GM12878 (cell line): ENCODE measurements at regions of chr1 and their contacts with region 1.

Region 1: GRCh38 chr1:119367427-119368124 is 1.0 kb upstream of the HAO2 start:
- DNase-seq: no peak
- ATAC-seq: peak; percentile 82
- H3K4me3 ChIP-seq: no peak overlapping the region
- H3K27ac ChIP-seq: no peak overlapping the region
- H3K4me1 ChIP-seq: peaks cover 5% of the 10 kb centered on the region; the same call in 1 of the 2 replicates
- H3K27me3 ChIP-seq: no peaks in the 10 kb centered on the region
- CTCF ChIP-seq: peak; percentile 93 to 98 (median 94); a peak in 5 of 6 replicates
- EP300 ChIP-seq: no peak
- POLR2A ChIP-seq: no peak
- RAD21 ChIP-seq: peak; percentile 99

Region 2: DNA sequence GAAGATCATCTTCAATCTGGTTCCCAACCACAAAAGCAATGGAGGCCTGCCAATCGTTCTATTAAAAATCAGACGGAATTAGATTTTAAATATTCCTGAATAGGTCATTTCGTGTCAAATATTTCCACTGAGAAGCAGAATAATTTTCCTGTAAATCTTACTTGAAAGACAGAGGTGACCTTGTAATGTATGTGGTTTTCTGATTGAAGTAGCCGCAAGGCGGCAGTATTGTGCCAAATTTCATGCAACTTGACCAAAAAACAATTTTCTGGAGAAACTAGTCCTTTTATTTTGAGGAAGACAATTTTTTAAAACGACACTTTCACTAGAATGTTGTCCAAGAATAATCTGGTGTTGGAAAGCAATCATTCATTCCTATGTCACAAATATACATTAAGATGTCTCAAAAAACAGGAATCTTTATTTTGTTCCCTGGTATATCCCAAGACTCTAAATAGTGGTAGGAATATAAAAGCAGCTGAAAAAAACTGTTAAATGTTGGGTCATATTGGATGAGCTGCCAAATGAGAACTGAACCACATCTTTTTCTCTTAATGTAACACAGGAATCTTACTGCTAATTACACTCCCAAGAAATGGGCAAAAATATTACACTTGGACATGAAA is 1216.2 kb before region 1 on chr1:
- CTCF ChIA-PET with region 1: interaction called, 3 read pairs
- POLR2A ChIA-PET with region 1: no interaction called
- RAD21 ChIA-PET with region 1: no interaction called
- SMC1A ChIA-PET with region 1: no interaction called
- in situ Hi-C with region 1: no loop called
- intact Hi-C with region 1: loop called (anchors 5 kb)
- DNase-seq: peak; percentile 8
- ATAC-seq: peak; percentile 44; the same call in 2 of the 3 replicates
- H3K4me3 ChIP-seq: no peak overlapping the region
- H3K27ac ChIP-seq: no peak overlapping the region
- H3K4me1 ChIP-seq: no peaks in the 10 kb centered on the region
- H3K27me3 ChIP-seq: no peaks in the 10 kb centered on the region
- CTCF ChIP-seq: peak; percentile 73 to 87 (median 74)
- EP300 ChIP-seq: no peak
- POLR2A ChIP-seq: no peak
- RAD21 ChIP-seq: peak; percentile 76

Region 3: DNA sequence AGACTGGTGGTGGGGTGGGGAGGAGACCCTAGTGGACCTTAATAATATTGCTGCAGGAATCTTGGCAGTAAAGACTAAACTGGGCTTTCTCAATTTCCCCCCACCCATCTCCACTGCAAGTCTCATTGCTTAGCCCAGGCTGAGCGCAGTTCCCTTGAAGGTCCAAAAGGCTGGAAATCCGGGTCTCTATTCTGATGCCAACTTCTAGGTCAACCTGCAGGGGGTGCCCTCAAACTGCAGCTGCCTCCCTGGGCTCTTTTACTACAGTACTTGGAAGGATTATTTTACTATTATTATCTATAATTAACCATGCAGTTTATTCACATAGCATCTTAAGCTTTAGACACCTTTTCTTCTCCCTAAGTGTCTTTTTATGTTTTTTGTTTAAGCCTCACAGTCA is 141.7 kb before region 1 on chr1:
- CTCF ChIA-PET with region 1: interaction called, 5 read pairs
- POLR2A ChIA-PET with region 1: no interaction called
- RAD21 ChIA-PET with region 1: interaction called, 3 read pairs
- SMC1A ChIA-PET with region 1: interaction called, 3 read pairs
- in situ Hi-C with region 1: no loop called
- intact Hi-C with region 1: loop called (anchors 5 kb)
- DNase-seq: no peak
- ATAC-seq: no peak
- H3K4me3 ChIP-seq: no peak overlapping the region
- H3K27ac ChIP-seq: no peak overlapping the region
- H3K4me1 ChIP-seq: peaks cover 4% of the 10 kb centered on the region; the same call in 1 of the 2 replicates
- H3K27me3 ChIP-seq: no peaks in the 10 kb centered on the region
- CTCF ChIP-seq: peak; percentile 6 to 26 (median 19); a peak in 3 of 6 replicates
- EP300 ChIP-seq: no peak
- POLR2A ChIP-seq: no peak
- RAD21 ChIP-seq: peak; percentile 16; the same call in 1 of the 2 replicates

Region 4: DNA sequence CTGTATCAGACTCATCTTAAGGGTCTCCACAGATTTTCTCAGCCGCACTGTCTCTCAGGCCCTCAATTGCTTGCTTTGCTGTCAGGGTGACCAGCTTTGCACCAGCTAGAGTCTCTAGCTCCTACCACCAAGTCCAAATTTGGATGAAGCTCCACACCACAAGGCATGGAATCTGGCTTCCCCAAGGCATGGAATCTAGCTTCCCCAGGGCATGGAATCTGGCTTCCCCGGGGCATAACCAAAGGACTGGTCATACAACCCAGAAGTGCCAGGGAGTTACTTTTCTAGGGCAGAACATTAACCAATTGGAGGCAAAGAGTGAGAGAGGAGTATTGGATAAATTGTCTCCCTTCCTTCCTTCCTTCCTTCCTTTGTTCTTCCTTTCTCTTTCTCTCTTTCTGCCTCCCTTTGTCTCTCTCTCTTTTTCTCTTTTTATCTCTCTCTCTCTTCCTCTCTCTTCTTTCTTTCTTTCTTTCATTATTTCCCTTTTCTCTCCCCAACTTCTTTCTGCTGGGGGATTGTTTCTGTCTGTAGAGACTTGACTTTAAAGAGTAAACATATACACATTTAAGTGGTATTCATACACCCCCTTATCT is 75.9 kb before region 1 on chr1:
- CTCF ChIA-PET with region 1: interaction called, 137 read pairs
- POLR2A ChIA-PET with region 1: interaction called, 4 read pairs
- RAD21 ChIA-PET with region 1: interaction called, 63 read pairs
- SMC1A ChIA-PET with region 1: interaction called, 57 read pairs
- in situ Hi-C with region 1: loop called (anchors 5 kb)
- intact Hi-C with region 1: loop called (anchors 1 kb)
- DNase-seq: no peak
- ATAC-seq: no peak
- H3K4me3 ChIP-seq: no peak overlapping the region
- H3K27ac ChIP-seq: no peak overlapping the region
- H3K4me1 ChIP-seq: no peaks in the 10 kb centered on the region
- H3K27me3 ChIP-seq: no peaks in the 10 kb centered on the region
- CTCF ChIP-seq: no peak
- EP300 ChIP-seq: no peak
- POLR2A ChIP-seq: no peak
- RAD21 ChIP-seq: no peak

Region 5: DNA sequence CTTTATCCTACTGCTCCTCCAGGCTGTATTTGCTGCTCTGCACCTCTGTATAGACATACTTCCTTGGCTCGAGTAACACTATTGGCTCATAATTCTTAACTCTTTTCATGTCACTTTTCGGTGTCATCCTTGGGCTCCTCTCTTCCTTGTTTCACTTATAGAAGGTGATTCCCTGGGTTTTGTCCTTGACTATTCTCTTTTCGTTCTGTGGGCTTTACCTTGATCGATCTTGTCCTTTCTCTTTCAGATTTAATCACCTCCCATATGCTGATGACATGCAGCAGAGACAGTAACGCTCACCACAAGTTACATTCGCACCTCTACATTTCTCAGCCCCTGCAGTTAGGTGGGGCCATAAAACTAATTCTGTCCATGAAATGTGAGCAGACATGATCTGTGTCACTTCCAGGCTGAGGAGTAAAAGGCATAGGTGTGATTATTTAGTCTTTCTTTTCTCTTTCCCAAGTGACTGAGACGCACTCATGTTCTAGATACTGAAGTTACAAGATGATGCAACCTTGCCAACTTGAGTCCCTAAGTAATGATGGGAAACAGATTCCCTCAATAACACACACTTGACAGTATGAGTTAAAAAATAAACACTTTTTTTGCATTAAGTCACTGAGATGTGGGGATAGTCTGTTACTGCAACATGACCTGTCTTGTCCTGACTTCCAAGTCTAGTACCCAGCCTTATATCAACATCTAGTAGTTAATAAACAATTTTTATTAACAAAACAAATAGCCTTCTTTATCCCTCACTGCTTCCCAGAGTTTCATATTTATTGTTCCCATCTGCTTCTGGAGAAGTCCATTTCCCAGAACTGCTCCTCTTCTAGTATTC is 48.9 kb before region 1 on chr1:
- CTCF ChIA-PET with region 1: interaction called, 55 read pairs
- POLR2A ChIA-PET with region 1: interaction called, 3 read pairs
- RAD21 ChIA-PET with region 1: interaction called, 39 read pairs
- SMC1A ChIA-PET with region 1: interaction called, 43 read pairs
- in situ Hi-C with region 1: no loop called
- intact Hi-C with region 1: loop called (anchors 1 kb)
- DNase-seq: peak; percentile 82
- ATAC-seq: peak; percentile 84
- H3K4me3 ChIP-seq: peak overlapping the region; percentile 59
- H3K27ac ChIP-seq: peak overlapping the region; percentile 76
- H3K4me1 ChIP-seq: peaks cover 22% of the 10 kb centered on the region
- H3K27me3 ChIP-seq: no peaks in the 10 kb centered on the region
- CTCF ChIP-seq: peak in 1 of 3 experiments; percentile 3; a peak in 1 of 6 replicates
- EP300 ChIP-seq: peak in 1 of 2 experiments; percentile 66; a peak in 1 of 4 replicates
- POLR2A ChIP-seq: no peak
- RAD21 ChIP-seq: peak; percentile 4; the same call in 1 of the 2 replicates

Region 6: GRCh38 chr1:119347858-119348257 is 19.7 kb before region 1 on chr1:
- CTCF ChIA-PET with region 1: interaction called, 10 read pairs
- POLR2A ChIA-PET with region 1: no interaction called
- RAD21 ChIA-PET with region 1: interaction called, 36 read pairs
- SMC1A ChIA-PET with region 1: interaction called, 12 read pairs
- in situ Hi-C with region 1: no loop called
- intact Hi-C with region 1: no loop called
- DNase-seq: peak; percentile 77
- ATAC-seq: peak; percentile 96
- H3K4me3 ChIP-seq: no peak overlapping the region
- H3K27ac ChIP-seq: no peak overlapping the region
- H3K4me1 ChIP-seq: peaks cover 5% of the 10 kb centered on the region; the same call in 1 of the 2 replicates
- H3K27me3 ChIP-seq: no peaks in the 10 kb centered on the region
- CTCF ChIP-seq: no peak
- EP300 ChIP-seq: 0 out of 4 replicates have a peak, but pooled peaks of 1 of the 2 experiments have one; percentile 43
- POLR2A ChIP-seq: no peak
- RAD21 ChIP-seq: no peak